ENCODE measurements at regions of chr1 and their contacts with region 1.

Region 1: GRCh38 chr1:151340870-151341754 is 5.9 kb downstream of the RFX5 start:
- DNase-seq: peak in 10 of 14 experiments; percentile 12 to 85 (median 38)
- ATAC-seq: peak; percentile 93
- H3K4me3 ChIP-seq: no peak overlapping the region
- H3K4me3 Mint-ChIP-seq: no peak overlapping the region
- H3K27ac ChIP-seq: no peak overlapping the region
- H3K27ac Mint-ChIP-seq: peak overlapping the region; percentile 7
- H3K4me1 ChIP-seq: peaks cover 20% of the 10 kb centered on the region
- H3K4me1 Mint-ChIP-seq: peaks cover 21% of the 10 kb centered on the region
- H3K27me3 ChIP-seq: no peaks in the 10 kb centered on the region
- H3K27me3 Mint-ChIP-seq: no peaks in the 10 kb centered on the region
- CTCF ChIP-seq: peak; percentile 85

Region 2: DNA sequence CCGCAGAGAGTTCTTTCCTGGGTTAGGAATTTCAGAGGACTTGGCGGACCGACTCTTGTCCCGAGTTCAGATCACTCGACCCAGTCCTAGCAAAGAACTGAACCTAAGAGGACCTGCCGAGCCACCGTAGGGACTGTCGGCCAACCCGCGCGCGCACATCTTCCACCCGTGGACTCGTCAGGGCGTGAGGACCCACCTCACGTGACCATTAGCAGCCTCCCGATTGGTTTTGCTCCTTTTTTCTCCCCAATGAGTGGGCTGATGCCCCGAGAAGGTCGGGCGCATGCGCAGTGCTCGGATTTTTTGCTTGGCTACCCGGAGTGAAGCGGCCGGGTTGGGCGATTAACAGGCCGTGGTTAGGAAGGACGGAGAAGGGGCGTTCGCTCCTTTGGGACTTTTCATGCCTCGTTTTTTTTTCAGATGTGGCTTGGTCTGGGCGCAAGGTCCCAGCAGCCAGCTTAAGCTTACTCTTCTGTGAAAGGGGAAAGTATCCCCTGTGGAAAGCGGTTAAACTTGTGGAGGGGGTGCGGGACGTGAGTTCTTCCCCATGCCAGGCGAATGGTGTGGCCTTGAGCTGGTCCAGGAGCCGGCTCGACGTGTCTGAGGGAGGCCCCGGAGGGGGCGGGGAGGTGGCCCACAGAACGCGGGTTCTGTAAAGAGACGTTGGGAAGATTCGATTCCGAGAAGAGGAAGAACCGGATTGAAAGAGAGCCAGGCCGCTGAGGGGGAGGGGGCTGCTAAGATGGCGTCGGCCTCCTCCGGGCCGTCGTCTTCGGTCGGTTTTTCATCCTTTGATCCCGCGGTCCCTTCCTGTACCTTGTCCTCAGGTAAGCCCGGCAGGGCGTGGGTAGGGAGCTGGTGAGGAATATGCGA is 142.6 kb before region 1 on chr1 and contains the start of gene PIP5K1A:
- CTCF ChIA-PET with region 1: no interaction called
- POLR2A ChIA-PET with region 1: interaction called, 3 read pairs
- intact Hi-C with region 1: loop called (anchors 1 to 10 kb)
- DNase-seq: peak; percentile 96 to 99 (median 99)
- ATAC-seq: peak; percentile 95
- H3K4me3 ChIP-seq: peak within 1 kb of the TSS; percentile 93
- H3K4me3 Mint-ChIP-seq: peak within 1 kb of the TSS; percentile 98
- H3K27ac ChIP-seq: peak within 1 kb of the TSS; percentile 69 to 77
- H3K27ac Mint-ChIP-seq: peak within 1 kb of the TSS; percentile 96
- H3K4me1 ChIP-seq: peaks cover 43% of the 10 kb centered on the region
- H3K4me1 Mint-ChIP-seq: peaks cover 48% of the 10 kb centered on the region
- H3K27me3 ChIP-seq: no peaks in the 10 kb centered on the region
- H3K27me3 Mint-ChIP-seq: peaks cover 4% of the 10 kb centered on the region
- CTCF ChIP-seq: no peak
- total RNA-seq, gene PIP5K1A: 41.7 to 44.7 TPM

Region 3: GRCh38 chr1:151311589-151312331 is 29.4 kb before region 1 on chr1:
- CTCF ChIA-PET with region 1: interaction called, 14 read pairs
- POLR2A ChIA-PET with region 1: interaction called, 3 read pairs
- intact Hi-C with region 1: no loop called
- DNase-seq: peak in 13 of 14 experiments; percentile 20 to 82 (median 54)
- ATAC-seq: peak; percentile 91
- H3K4me3 ChIP-seq: no peak overlapping the region
- H3K4me3 Mint-ChIP-seq: no peak overlapping the region
- H3K27ac ChIP-seq: peak overlapping the region; percentile 25 to 39
- H3K27ac Mint-ChIP-seq: peak overlapping the region; percentile 59
- H3K4me1 ChIP-seq: peaks cover 28% of the 10 kb centered on the region
- H3K4me1 Mint-ChIP-seq: peaks cover 46% of the 10 kb centered on the region
- H3K27me3 ChIP-seq: no peaks in the 10 kb centered on the region
- H3K27me3 Mint-ChIP-seq: no peaks in the 10 kb centered on the region
- CTCF ChIP-seq: no peak